ENCODE measurements at regions of chr15 and their contacts with region 1.

Region 1: DNA sequence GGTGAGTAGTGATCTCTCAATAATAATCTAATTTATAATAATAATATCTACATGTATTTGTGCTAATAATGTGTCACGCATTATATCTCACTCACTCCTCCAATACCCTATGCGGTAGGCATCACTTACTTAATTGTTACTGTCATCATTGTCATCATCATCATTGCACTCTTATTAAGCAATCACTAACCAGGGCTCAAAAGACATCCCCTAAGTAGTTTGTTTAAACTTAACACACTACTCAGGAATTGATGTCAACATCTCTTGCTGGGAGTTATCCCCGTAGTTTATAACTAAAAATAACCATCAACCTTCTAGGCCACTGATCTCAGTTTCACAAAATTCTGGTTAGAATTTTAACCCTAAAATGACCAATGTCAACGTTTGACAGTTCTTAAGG is 56.8 kb upstream of the ICE2 start:
- DNase-seq: no peak
- H3K4me3 Mint-ChIP-seq: no peak overlapping the region
- H3K27ac Mint-ChIP-seq: no peak overlapping the region
- H3K4me1 Mint-ChIP-seq: peaks cover 62% of the 10 kb centered on the region
- H3K27me3 Mint-ChIP-seq: no peaks in the 10 kb centered on the region

Region 2: DNA sequence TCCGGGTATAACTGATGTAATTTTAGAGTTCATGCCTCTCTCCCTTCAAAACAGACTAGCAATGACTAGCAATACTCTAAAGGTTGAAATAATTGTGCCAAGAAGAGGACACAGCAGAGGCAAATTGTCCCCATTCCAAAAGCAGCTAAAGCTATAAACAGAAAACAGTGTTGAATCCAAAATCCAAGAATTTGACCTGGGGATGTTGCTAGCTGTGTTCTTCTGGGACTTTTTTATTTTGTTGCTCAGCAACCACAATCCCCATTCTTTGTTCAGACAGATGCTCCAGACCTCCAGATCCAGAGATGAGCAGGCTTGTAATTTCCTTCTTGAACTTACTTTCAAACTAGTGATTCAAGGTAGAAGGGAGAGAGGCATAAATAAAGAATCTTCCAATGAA is 340.1 kb before region 1 on chr15:
- CTCF ChIA-PET with region 1: no interaction called
- POLR2A ChIA-PET with region 1: no interaction called
- DNase-seq: no peak
- H3K4me3 Mint-ChIP-seq: no peak overlapping the region
- H3K27ac Mint-ChIP-seq: no peak overlapping the region
- H3K4me1 Mint-ChIP-seq: no peaks in the 10 kb centered on the region
- H3K27me3 Mint-ChIP-seq: peaks cover 62% of the 10 kb centered on the region

Region 3: DNA sequence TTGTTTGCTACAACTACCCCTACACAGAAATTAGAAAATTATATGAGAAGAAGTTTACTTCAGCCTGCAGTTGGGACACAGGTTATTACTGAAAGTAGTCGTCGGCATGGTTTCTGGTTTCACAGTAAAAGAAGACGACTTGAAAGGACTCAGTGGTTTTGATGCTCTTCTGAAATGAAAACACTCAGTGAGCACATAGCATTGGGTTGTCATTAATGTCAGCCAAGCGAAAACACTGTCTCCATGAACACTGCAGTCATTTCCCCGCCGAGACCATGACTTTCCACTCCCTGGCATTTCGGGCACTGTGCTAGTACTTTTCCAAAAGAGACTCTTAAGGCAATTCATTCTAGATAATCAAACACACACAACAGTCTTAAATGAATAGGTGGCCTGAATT is 12.4 kb after region 1 on chr15:
- CTCF ChIA-PET with region 1: interaction called, 6 read pairs
- POLR2A ChIA-PET with region 1: interaction called, 83 read pairs
- DNase-seq: peak; percentile 60
- H3K4me3 Mint-ChIP-seq: peak overlapping the region; percentile 65
- H3K27ac Mint-ChIP-seq: peak overlapping the region; percentile 95
- H3K4me1 Mint-ChIP-seq: peaks cover 96% of the 10 kb centered on the region
- H3K27me3 Mint-ChIP-seq: no peaks in the 10 kb centered on the region